ENCODE measurements at regions of chrX and their contacts with region 1.

Region 1: GRCh38 chrX:118226090-118226428 is 109.4 kb upstream of the KLHL13 start:
- DNase-seq: no peak
- H3K4me3 ChIP-seq: no peak overlapping the region
- H3K27ac ChIP-seq: peak overlapping the region in 3 of 4 donors; percentile 36 to 40 (median 38)
- H3K4me1 ChIP-seq: peaks cover 0 to 9% (median 2%) of the 10 kb centered on the region in 4 donors
- H3K27me3 ChIP-seq: no peaks in the 10 kb centered on the region
- CTCF ChIP-seq: peak; percentile 24 to 59 (median 36)
- EP300 ChIP-seq: no peak
- POLR2A ChIP-seq: no peak

Region 2: DNA sequence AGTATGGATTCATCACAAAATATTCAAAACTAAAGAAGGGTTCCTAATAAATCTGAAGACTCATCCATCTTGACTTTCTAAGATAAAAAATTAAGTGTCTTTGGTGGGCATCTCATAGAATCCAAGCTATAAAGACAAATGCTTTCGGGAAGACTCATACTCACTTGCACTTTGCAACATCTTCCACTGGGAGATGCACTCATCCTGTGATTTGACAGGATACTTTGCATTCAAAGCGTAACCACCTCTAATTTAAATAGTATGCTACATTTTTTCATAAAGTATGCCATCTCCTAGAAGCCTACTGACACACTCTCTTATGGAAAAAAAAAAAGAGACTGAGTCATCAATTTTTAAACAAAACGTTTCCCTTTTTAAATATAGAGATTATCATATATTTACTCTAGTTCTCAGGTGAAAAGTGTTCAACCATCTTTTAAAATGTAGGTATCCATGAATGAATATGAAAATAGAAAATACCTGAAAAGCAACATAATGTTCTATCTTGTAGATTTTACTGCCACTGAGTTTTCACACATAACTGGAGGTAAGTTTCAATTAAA is 229.1 kb before region 1 on chrX:
- in situ Hi-C with region 1: loop called in 2 of 4 experiments (anchors 10 to 25 kb)
- intact Hi-C with region 1: no loop called
- DNase-seq: no peak
- H3K4me3 ChIP-seq: no peak overlapping the region
- H3K27ac ChIP-seq: no peak overlapping the region
- H3K4me1 ChIP-seq: no peaks in the 10 kb centered on the region
- H3K27me3 ChIP-seq: no peaks in the 10 kb centered on the region
- CTCF ChIP-seq: peak in 4 of 5 experiments; percentile 26 to 32 (median 30)
- EP300 ChIP-seq: no peak
- POLR2A ChIP-seq: no peak

Region 3: DNA sequence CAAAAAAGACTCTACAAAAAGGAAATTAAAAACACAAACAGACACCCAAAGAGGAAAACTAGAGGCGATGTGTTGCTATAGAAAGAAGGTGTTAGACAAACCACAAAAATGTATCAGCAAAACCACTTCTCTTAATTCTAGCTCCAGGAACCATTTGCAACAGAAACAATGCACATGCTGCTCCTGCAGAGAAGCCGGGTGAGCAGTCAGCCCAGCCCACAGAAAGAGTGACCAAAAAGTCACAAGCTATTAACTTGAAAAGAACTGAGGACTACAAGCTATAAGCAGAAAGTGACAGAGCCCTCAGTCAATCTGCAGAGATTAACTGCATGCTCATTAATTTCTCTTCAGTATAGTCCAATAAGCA is 13.3 kb before region 1 on chrX:
- in situ Hi-C with region 1: no loop called
- intact Hi-C with region 1: no loop called
- DNase-seq: no peak
- H3K4me3 ChIP-seq: no peak overlapping the region
- H3K27ac ChIP-seq: no peak overlapping the region
- H3K4me1 ChIP-seq: peaks cover 0 to 8% (median 2%) of the 10 kb centered on the region in 4 donors
- H3K27me3 ChIP-seq: no peaks in the 10 kb centered on the region
- CTCF ChIP-seq: no peak
- EP300 ChIP-seq: no peak
- POLR2A ChIP-seq: no peak

Measured in transverse colon (tissue), 4 donors.